Activated naive CD4-positive, alpha-beta T cell treated with anti-CD3 and anti-CD28 coated beads, Interleukin-2, amount 10 ng/mL, durations not matched to agents 7 days and 5 days (primary cell): ENCODE measurements at regions of chr20 and their contacts with region 1.

Region 1: GRCh38 chr20:50750145-50750671 is 18.8 kb downstream of the PARD6B start:
- DNase-seq: no peak
- H3K4me3 Mint-ChIP-seq: no peak overlapping the region
- H3K27ac Mint-ChIP-seq: no peak overlapping the region
- H3K4me1 Mint-ChIP-seq: peaks cover 19% of the 10 kb centered on the region
- H3K27me3 Mint-ChIP-seq: no peaks in the 10 kb centered on the region

Region 2: DNA sequence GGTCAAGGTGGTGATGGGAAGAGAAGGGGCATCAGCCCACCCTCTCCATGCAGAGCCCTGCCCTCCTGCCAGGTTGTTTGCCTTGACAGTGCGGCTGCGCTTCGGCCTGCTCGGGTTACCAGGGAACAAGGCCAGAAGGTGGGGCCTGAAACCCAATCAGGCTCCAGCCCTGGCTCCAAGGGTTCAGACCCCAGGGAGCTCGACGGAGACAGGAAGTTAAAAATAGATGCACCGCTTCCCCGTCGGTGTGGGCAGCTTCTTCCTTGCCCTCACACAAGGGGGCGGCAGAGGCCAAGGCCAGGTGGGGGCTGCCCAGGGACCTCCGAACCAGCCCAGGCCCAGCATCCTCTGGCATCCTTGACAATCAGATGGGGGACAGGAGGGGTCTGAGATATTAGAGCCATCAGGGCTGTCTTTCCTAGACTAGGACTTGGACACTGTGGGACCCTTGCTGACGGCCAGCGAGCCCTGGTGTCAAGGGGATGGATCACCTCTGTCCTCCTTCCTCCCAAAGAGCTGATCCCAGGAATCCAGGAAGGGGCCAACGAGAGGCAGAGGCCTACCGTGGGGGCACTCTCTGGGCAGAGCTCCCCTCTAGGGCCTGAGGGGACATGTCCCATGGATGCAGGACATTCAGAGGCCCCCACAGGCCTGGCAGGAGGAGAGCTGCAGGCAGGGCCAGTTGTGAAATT is 124.1 kb before region 1 on chr20:
- CTCF ChIA-PET with region 1: interaction called, 14 read pairs
- DNase-seq: peak; percentile 33
- H3K4me3 Mint-ChIP-seq: no peak overlapping the region
- H3K27ac Mint-ChIP-seq: no peak overlapping the region
- H3K4me1 Mint-ChIP-seq: no peaks in the 10 kb centered on the region
- H3K27me3 Mint-ChIP-seq: peaks cover 15% of the 10 kb centered on the region

Region 3: DNA sequence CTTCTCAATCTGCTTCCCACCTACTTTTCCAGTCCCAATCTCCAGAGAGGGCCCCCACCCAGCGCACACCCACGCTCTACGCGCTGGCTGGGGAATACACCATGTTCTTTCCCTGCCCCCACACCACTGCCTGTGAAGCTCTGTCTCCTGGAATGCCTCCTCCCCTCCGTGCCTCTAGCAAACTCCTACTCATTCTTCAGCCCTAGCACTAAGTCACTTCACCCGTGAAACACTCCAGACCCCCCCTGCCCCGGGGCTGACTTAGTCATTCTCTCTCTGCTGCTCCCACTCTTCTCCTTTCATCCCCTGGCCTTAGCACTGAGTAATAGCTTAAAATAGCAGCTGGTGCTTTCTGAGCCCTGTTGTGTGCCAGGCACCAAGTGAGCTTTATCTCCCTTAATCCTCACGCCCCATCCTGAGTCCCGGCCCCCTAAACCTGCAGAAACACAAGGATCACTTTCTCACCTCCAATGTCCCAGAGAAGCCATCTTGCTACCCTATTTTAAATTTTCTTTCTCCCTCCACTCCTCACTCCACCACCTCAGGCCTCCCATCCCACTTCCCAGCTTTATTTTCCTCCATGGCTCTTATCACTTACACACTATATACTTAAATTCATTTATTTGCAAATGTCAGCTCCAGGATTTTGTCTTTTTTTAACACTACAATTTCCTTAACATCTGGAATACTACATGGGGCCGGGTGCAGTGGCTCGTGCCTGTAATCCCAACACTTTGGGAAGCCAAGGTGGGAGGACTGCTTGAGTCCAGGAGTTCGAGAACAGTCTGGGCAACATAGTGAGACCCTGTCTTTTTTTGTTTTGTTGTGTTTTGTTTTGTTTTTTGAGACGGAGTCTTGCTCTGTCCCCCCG is 25.1 kb before region 1 on chr20:
- CTCF ChIA-PET with region 1: interaction called, 11 read pairs
- DNase-seq: no peak
- H3K4me3 Mint-ChIP-seq: no peak overlapping the region
- H3K27ac Mint-ChIP-seq: no peak overlapping the region
- H3K4me1 Mint-ChIP-seq: peaks cover under 1% of the 10 kb centered on the region
- H3K27me3 Mint-ChIP-seq: no peaks in the 10 kb centered on the region